ENCODE measurements at regions of chr2 and their contacts with region 1.

Region 1: DNA sequence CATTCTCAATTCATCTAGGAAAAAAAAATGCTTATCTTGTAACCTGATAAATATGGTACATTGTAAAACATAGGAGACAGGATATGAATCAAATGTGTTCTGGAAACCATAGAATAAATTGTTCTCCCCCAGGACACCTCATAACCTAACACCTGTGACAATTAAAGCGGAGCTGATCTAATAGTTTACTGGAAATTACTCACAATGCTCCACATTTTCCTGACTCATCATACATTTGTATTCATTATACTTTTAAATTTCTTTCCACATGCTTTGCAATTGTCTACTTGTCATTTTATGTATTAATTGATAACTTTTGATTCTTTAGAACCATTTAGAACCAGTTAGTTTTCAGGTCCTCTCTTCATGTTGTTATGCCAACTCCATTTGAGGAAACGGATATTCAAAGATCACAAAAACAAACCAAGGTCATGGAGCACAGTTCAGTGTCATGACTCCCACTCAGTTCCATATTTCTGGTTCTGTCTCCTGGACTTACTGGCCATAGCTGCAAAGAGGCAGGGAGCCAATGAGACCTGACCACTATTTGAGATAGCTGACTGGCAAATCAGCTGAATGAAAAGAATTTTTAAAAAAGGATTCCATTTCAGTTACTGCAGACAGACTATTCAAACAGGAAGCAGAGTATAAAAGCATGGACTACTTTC is 128.5 kb downstream of the CALCRL start:
- DNase-seq: no peak
- ATAC-seq: no peak
- H3K4me3 ChIP-seq: no peak overlapping the region
- H3K27ac ChIP-seq: no peak overlapping the region
- H3K4me1 ChIP-seq: no peaks in the 10 kb centered on the region
- H3K27me3 ChIP-seq: no peaks in the 10 kb centered on the region
- CTCF ChIP-seq: no peak

Region 2: GRCh38 chr2:187442378-187442777 is 122.8 kb after region 1 on chr2:
- intact Hi-C with region 1: loop called in 1 of 2 experiments (anchors 10 kb)
- DNase-seq: no peak
- ATAC-seq: no peak
- H3K4me3 ChIP-seq: peak overlapping the region in 1 of 2 donors; percentile 24
- H3K27ac ChIP-seq: no peak overlapping the region
- H3K4me1 ChIP-seq: no peaks in the 10 kb centered on the region
- H3K27me3 ChIP-seq: no peaks in the 10 kb centered on the region
- CTCF ChIP-seq: no peak

Region 3: GRCh38 chr2:187851955-187852561 is 532.5 kb after region 1 on chr2:
- intact Hi-C with region 1: no loop called
- DNase-seq: peak in 1 of 4 donors; percentile 12
- ATAC-seq: peak; percentile 32
- H3K4me3 ChIP-seq: no peak overlapping the region
- H3K27ac ChIP-seq: peak overlapping the region in 1 of 2 donors; percentile 21
- H3K4me1 ChIP-seq: no peaks in the 10 kb centered on the region
- H3K27me3 ChIP-seq: no peaks in the 10 kb centered on the region
- CTCF ChIP-seq: no peak